Transverse colon (tissue), 4 donors: ENCODE measurements at regions of chr12 and their contacts with region 1.

Region 1: GRCh38 chr12:128715485-128715884 is 108.3 kb downstream of the SLC15A4 start:
- DNase-seq: no peak
- H3K4me3 ChIP-seq: no peak overlapping the region
- H3K27ac ChIP-seq: no peak overlapping the region
- H3K4me1 ChIP-seq: no peaks in the 10 kb centered on the region
- H3K27me3 ChIP-seq: no peaks in the 10 kb centered on the region
- CTCF ChIP-seq: no peak
- EP300 ChIP-seq: no peak
- POLR2A ChIP-seq: no peak

Region 2: DNA sequence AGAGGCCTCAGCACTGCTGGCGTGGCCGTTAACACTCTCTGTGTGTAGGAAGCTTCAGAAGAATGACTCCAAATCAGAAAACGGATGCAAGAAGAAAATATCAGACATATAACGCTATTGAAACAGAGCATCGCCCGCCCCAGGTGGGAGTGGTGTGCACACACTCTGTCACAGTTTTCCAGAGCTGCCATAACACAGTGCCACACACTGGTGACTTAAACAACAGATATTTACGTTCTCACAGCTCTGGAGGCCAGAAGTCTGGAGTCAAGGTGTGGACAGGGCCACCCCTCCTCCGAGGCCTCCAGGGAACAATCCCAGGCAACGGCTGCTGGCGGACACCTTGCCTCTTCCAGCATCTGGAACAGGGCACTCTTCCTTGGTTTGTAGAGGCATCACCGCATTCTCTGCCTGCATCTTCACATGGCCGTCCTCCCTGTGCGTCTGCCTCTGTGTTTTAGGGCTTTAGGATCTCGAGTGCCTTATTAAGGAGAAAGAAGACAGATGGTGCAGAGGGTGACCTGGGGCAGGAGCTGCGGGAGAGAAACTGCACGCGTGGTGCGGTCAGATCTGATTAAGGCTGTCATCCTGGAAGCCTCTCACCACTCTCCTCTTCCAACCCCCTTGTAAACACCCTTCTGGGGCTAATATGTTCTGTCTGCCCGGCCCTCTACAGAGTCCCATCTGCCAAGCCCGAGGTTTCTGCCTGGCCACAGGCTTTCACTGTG is 32.8 kb before region 1 on chr12:
- in situ Hi-C with region 1: no loop called
- intact Hi-C with region 1: loop called (anchors 1 kb)
- DNase-seq: no peak
- H3K4me3 ChIP-seq: no peak overlapping the region
- H3K27ac ChIP-seq: no peak overlapping the region
- H3K4me1 ChIP-seq: no peaks in the 10 kb centered on the region
- H3K27me3 ChIP-seq: no peaks in the 10 kb centered on the region
- CTCF ChIP-seq: no peak
- EP300 ChIP-seq: no peak
- POLR2A ChIP-seq: no peak

Region 3: GRCh38 chr12:128771681-128772080 is 56.2 kb after region 1 on chr12:
- in situ Hi-C with region 1: no loop called
- intact Hi-C with region 1: no loop called
- DNase-seq: no peak
- H3K4me3 ChIP-seq: no peak overlapping the region
- H3K27ac ChIP-seq: no peak overlapping the region
- H3K4me1 ChIP-seq: no peaks in the 10 kb centered on the region
- H3K27me3 ChIP-seq: peaks cover 20% of the 10 kb centered on the region
- CTCF ChIP-seq: no peak
- EP300 ChIP-seq: no peak
- POLR2A ChIP-seq: no peak

Region 4: GRCh38 chr12:128783129-128783574 is 67.7 kb after region 1 on chr12:
- in situ Hi-C with region 1: no loop called
- intact Hi-C with region 1: no loop called
- DNase-seq: no peak
- H3K4me3 ChIP-seq: no peak overlapping the region
- H3K27ac ChIP-seq: no peak overlapping the region
- H3K4me1 ChIP-seq: no peaks in the 10 kb centered on the region
- H3K27me3 ChIP-seq: no peaks in the 10 kb centered on the region
- CTCF ChIP-seq: no peak
- EP300 ChIP-seq: no peak
- POLR2A ChIP-seq: no peak